PC-9 (cell line): ENCODE measurements at regions of chr13 and their contacts with region 1.

Region 1: DNA sequence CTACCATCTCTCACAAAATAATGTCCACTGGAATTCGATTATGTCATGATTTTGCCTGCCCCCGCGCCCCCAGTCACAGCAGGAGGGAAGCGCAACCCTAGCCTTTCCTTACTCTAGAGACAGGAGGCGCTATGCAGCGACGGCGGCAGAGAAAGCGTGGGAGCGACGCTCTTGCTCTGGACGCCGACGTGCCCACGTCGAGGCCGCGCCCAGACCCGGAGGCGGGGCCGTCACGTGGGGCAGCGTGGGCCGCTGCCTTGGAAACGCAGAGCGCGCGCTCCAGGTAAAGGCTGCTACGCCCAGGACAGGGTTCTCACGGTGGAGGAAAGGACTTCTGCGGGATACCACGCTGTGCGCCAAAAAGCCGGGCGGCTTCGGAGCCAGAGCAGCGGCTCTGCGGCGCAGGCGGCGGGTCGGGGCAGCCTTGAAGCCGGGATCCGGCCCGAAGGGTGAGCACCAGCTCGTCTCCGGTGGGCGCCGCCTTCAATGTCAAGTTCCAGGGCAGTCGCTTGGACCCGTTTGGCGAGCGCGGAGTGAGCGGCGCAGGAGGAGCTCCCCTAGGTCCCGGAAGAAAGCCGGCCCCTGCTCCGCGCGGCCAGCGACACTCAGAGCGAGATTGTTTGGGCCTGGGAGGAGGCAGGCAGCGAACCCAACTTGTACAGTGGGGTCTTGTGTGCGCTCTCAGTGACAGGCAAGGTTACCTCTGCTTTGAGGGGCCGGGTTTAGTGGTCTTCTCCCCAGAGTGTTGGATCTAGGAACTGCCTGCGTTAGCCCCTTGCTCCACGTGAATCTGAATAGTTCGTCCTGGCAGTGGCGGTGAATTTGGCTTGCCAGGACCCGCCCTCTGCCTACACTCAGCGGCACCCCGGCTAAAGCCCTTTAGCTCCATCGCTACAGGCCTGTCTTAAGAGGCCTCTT is 121.7 kb downstream of the MRPL57 start:
- DNase-seq: peak; percentile 78 to 81
- H3K4me3 ChIP-seq: peak overlapping the region; percentile 70
- H3K27ac ChIP-seq: peak overlapping the region; percentile 69
- H3K4me1 ChIP-seq: peaks cover 18% of the 10 kb centered on the region
- H3K27me3 ChIP-seq: no peaks in the 10 kb centered on the region
- CTCF ChIP-seq: peak; percentile 81

Region 2: GRCh38 chr13:20495082-20496023 is 802.8 kb before region 1 on chr13:
- CTCF ChIA-PET with region 1: no interaction called
- POLR2A ChIA-PET with region 1: no interaction called
- intact Hi-C with region 1: loop called (anchors 10 kb)
- DNase-seq: peak; percentile 41 to 69
- H3K4me3 ChIP-seq: no peak overlapping the region
- H3K27ac ChIP-seq: no peak overlapping the region
- H3K4me1 ChIP-seq: no peaks in the 10 kb centered on the region
- H3K27me3 ChIP-seq: no peaks in the 10 kb centered on the region
- CTCF ChIP-seq: peak; percentile 97

Region 3: DNA sequence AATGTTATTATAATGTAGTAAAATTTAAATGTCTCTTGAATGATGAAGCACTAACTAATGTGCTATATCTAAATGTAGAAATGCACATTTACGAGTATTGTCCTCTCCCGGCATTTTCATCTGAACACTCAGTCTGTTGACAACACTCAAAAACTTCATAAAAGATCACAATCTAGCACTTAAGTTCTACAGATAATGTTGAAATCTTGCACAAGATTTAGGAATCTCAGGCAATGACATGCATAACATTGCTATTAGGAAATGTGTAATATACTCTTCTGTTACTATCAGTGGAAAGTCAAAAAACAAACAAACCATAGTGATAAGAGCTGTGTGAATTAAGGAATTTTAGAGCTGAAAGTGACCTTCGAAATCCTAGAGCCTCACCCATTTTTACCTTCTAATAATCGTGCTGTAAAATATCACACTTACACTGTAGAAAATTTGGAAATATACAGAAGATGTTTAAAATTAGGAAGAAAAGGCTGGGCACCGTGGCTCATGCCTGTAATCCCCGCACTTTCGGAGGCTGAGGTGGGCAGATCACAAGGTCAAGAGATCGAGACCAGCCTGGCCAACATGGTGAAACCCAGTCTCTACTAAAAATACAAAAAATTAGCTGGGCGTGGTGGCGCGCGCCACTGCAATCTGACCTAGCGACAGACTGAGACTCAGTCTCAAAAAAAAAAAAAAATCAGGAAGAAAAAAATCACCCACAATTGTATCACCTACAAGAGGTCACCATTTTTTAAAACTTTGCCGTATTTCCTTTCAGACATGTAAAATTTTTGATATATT is 357.9 kb before region 1 on chr13:
- CTCF ChIA-PET with region 1: no interaction called
- POLR2A ChIA-PET with region 1: no interaction called
- intact Hi-C with region 1: loop called (anchors 5 kb)
- DNase-seq: peak in 1 of 2 experiments; percentile 76
- H3K4me3 ChIP-seq: no peak overlapping the region
- H3K27ac ChIP-seq: 0 out of 2 replicates have a peak overlapping the region, but pooled peaks have one; percentile 8
- H3K4me1 ChIP-seq: peaks cover 15% of the 10 kb centered on the region
- H3K27me3 ChIP-seq: no peaks in the 10 kb centered on the region
- CTCF ChIP-seq: no peak

Region 4: DNA sequence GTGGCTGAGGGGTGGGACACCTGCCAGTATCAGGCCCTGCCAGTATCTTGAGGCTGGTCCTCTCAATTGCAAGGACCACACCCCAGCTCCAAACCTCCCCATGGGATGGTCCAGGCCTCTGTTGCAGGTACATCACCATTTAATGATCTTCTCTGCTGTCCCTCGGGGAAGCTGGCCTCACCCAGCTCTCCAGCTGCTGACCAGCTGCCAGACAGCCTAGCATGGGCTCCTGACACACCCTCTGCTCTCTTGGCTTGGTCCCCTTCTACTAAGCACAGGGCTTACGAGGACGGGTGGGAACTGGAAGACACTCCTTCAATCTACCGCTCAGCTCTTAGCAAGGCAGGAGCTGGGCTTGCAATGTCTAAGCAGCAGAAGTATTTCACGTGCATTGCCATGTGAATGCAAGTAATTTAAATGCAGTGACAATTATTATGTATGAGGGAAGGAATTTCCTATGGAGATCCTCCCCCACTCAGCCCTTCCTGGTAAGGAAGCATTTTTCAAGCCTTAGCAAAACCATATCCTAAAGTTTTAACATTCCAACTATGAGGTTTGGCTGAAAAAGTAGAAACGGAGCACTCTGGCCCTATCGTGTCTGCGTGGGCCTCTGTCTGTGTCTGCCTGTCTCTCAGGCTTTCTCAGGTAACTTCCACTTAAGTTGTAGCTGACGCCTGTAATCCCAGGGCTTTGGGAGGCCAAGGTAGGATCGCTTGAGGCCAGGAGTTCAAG is 300.6 kb before region 1 on chr13:
- CTCF ChIA-PET with region 1: no interaction called
- POLR2A ChIA-PET with region 1: no interaction called
- intact Hi-C with region 1: no loop called
- DNase-seq: no peak
- H3K4me3 ChIP-seq: no peak overlapping the region
- H3K27ac ChIP-seq: no peak overlapping the region
- H3K4me1 ChIP-seq: no peaks in the 10 kb centered on the region
- H3K27me3 ChIP-seq: no peaks in the 10 kb centered on the region
- CTCF ChIP-seq: no peak

Region 5: GRCh38 chr13:21458813-21459701 is 160.9 kb after region 1 on chr13 and contains the start of gene ZDHHC20:
- CTCF ChIA-PET with region 1: no interaction called
- POLR2A ChIA-PET with region 1: no interaction called
- intact Hi-C with region 1: loop called (anchors 5 kb)
- DNase-seq: peak; percentile 61 to 86
- H3K4me3 ChIP-seq: peak within 1 kb of the TSS; percentile 82
- H3K27ac ChIP-seq: peak within 1 kb of the TSS; percentile 60
- H3K4me1 ChIP-seq: peaks cover 23% of the 10 kb centered on the region
- H3K27me3 ChIP-seq: no peaks in the 10 kb centered on the region
- CTCF ChIP-seq: no peak
- total RNA-seq, gene ZDHHC20: 31.9 and 47.5 TPM in 2 replicates

Region 6: GRCh38 chr13:21603531-21604448 is 305.6 kb after region 1 on chr13 and contains the start of gene MICU2:
- CTCF ChIA-PET with region 1: no interaction called
- POLR2A ChIA-PET with region 1: no interaction called
- intact Hi-C with region 1: loop called (anchors 5 kb)
- DNase-seq: peak; percentile 88 to 90
- H3K4me3 ChIP-seq: peak within 1 kb of the TSS; percentile 72
- H3K27ac ChIP-seq: peak within 1 kb of the TSS; percentile 83
- H3K4me1 ChIP-seq: no peaks in the 10 kb centered on the region
- H3K27me3 ChIP-seq: peaks cover 33% of the 10 kb centered on the region; the same call in 1 of the 2 replicates
- CTCF ChIP-seq: no peak
- total RNA-seq, gene MICU2: 17.0 and 18.3 TPM in 2 replicates

Region 7: DNA sequence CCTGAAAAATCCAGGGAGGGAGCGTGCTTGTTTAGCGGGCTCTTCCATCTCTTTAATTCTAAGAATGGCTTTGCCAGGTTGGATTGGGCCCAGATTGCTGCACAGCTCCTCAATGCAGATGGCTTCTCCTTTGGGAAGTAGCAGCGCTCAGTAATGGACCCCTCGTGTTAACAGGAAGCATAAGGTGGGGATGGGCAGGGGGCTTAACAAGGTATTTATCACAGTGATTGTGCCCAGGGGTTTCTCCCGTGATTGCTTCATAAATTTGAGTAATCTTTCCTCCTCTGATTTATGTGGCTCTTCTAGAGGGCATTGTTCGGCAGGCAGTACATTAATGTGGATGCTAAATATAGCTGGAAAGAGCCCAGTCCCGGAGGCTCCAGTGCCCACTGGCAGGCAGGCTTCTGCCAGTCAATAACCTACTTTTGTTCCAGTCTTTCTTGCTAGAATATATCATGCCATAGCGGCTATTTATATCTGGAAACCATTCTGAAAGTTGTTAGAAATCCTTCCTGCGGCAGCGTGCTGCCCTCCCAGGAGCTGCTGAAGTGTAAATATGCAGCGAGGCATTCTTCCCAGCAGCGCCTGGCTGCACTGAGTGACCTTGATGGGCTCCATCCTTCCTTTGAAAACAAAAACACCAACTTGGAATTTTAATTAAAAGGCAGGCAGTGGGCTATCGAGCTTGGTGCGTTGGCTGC is 437.7 kb after region 1 on chr13:
- CTCF ChIA-PET with region 1: no interaction called
- POLR2A ChIA-PET with region 1: no interaction called
- intact Hi-C with region 1: no loop called
- DNase-seq: no peak
- H3K4me3 ChIP-seq: no peak overlapping the region
- H3K27ac ChIP-seq: no peak overlapping the region
- H3K4me1 ChIP-seq: no peaks in the 10 kb centered on the region
- H3K27me3 ChIP-seq: peaks cover 83% of the 10 kb centered on the region
- CTCF ChIP-seq: no peak